Breast epithelium (tissue), 4 donors: ENCODE measurements at regions of chr5 and their contacts with region 1.

Region 1: DNA sequence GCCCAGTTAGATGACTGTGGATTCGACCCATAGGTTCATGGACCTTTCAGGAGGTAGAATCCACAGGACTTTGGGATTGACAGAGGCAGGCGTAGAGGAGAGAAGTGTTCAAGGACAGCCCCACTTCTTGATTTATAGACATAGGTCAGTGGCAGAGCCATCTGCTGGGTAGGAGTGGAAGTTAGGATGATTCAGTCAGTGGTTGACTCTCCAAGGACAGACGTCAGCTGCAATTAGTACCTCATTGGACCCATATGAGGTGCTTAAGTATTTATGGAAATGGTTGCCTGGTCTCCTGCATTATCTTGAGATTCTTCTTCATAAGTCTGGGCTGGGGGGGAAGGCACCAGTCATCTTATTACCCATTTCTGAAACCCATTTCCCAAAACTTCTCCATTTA is 70.9 kb downstream of the SH3RF2 start:
- DNase-seq: no peak
- H3K4me3 ChIP-seq: no peak overlapping the region
- H3K27ac ChIP-seq: no peak overlapping the region
- H3K4me1 ChIP-seq: no peaks in the 10 kb centered on the region
- H3K27me3 ChIP-seq: no peaks in the 10 kb centered on the region
- CTCF ChIP-seq: no peak
- POLR2A ChIP-seq: no peak

Region 2: GRCh38 chr5:145521066-145521465 is 486.2 kb before region 1 on chr5:
- intact Hi-C with region 1: loop called (anchors 10 kb)
- DNase-seq: peak in 1 of 2 donors; percentile 18
- H3K4me3 ChIP-seq: no peak overlapping the region
- H3K27ac ChIP-seq: no peak overlapping the region
- H3K4me1 ChIP-seq: no peaks in the 10 kb centered on the region
- H3K27me3 ChIP-seq: no peaks in the 10 kb centered on the region
- CTCF ChIP-seq: no peak
- POLR2A ChIP-seq: no peak

Region 3: DNA sequence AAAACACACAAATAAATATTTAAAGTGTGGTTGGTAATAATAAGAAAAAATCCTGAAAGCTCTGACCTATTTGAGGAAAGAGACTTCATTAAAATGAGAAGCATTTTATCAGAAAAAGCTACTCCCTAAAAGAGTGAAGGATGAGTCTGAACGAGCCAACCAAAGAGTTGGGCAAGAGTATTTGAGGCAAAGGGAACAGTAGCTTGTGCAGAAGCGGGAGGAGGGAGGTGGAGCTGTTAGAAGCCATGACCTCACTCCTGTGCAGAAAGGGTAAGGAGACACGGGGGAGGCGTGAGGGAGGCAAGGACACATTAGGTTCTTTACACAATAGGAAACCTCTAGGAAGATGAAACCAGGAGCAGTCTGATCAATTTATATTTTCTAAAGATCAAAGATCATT is 41.5 kb before region 1 on chr5:
- intact Hi-C with region 1: no loop called
- DNase-seq: no peak
- H3K4me3 ChIP-seq: no peak overlapping the region
- H3K27ac ChIP-seq: no peak overlapping the region
- H3K4me1 ChIP-seq: no peaks in the 10 kb centered on the region
- H3K27me3 ChIP-seq: no peaks in the 10 kb centered on the region
- CTCF ChIP-seq: no peak
- POLR2A ChIP-seq: no peak